ENCODE measurements at regions of chr7 and their contacts with region 1.

Region 1: DNA sequence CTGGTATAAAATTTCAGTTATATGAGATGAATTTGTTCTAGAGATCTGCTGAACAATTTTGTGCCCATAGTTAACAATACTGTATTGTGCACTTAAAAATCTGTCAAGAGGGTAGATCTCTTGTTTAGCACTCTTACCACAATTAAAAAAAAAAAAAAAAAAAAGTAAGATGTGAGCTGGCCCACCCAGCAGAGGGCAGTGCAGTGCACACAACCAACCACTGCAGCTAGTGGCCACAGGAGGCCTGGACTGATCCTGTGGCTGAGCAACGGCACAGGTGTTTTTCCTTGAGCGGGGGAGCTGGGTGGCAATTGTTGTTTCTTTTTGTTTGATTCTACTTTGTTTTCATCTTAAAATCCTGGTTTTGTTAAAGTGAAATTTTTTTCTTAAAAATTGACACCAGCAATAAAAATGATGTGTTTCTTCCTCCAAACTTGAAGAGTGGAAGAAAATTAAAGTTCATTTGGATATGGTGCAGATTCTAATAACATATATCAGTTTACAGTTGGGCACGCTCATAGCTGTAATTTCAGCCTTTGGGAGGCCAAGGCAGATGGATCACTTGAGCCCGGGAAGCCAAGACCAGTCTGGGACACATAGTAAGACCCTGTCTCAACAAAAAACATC is 171.1 kb upstream of the TBX20 start:
- DNase-seq: peak; percentile 65 to 80
- H3K4me3 ChIP-seq: no peak overlapping the region
- H3K27ac ChIP-seq: no peak overlapping the region
- H3K4me1 ChIP-seq: peaks cover 0 to 4% (median 0%) of the 10 kb centered on the region in 4 donors
- H3K27me3 ChIP-seq: peaks cover 0 to 2% (median 0%) of the 10 kb centered on the region in 3 donors
- CTCF ChIP-seq: peak in 6 of 7 experiments; percentile 21 to 79 (median 58)
- EP300 ChIP-seq: no peak
- POLR2A ChIP-seq: no peak

Region 2: DNA sequence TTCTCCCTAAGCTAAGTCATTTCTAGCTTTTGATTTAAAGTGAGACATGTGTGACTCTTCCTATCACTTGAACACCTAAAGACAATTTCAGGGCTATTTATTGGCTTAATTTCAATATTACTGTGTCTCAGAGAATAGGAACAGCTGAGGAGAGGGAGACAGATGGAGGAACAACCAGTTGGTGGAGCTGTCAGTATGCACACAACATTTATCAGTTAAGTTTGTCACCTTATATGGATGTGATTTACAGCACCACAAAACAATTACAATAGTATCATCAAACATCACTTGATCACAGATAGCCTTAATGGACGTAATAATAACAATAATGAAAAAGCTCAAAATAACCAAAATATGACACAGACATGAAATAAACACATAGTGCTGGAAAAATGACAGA is 637.4 kb before region 1 on chr7:
- intact Hi-C with region 1: no loop called
- DNase-seq: no peak
- H3K4me3 ChIP-seq: no peak overlapping the region
- H3K27ac ChIP-seq: no peak overlapping the region
- H3K4me1 ChIP-seq: no peaks in the 10 kb centered on the region
- H3K27me3 ChIP-seq: no peaks in the 10 kb centered on the region
- CTCF ChIP-seq: no peak
- EP300 ChIP-seq: no peak
- POLR2A ChIP-seq: no peak

Region 3: DNA sequence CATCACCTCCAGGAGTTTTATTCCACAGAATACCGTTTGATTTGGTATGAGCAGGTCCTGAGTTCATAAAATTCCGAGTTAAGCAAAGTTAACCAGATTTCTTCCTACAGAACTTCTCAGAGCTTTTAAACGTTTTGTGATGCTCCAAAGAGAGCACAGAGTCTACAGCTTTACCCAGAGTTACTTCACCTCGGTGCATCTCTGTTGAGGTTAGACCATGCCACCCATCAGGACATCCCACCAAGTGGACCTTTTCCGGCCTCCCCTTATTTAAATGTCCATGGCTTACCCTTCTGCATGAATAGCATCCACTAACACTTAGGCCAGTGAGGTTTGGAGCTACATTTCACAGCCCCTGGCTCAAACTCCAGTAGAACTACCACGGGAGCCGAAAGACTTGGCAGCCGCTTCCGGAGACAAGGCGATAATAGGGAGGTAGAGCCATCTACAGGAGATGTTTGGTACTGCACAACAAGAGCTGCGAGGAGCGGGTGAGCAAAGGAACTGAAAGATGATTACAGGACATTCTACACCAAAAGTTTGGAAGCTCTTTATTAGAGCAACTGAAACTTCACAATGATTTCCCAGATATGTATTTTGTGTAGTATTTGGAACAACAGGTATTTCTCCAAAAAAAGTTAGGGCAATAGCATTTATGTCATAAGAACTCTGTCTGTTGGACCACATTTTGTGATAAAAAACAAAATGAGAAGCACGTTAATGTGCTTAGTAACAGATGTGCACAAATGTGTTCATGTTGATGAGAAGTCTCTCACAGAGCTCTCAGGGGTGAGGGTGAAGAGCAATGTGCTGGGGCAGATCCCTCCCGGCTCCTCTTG is 95.2 kb after region 1 on chr7:
- intact Hi-C with region 1: loop called (anchors 10 kb)
- DNase-seq: peak; percentile 77 to 91
- H3K4me3 ChIP-seq: no peak overlapping the region
- H3K27ac ChIP-seq: no peak overlapping the region
- H3K4me1 ChIP-seq: no peaks in the 10 kb centered on the region
- H3K27me3 ChIP-seq: peaks cover 0 to 23% (median 0%) of the 10 kb centered on the region in 3 donors
- CTCF ChIP-seq: peak in 5 of 7 experiments; percentile 75 to 88 (median 79)
- EP300 ChIP-seq: no peak
- POLR2A ChIP-seq: no peak

Region 4: GRCh38 chr7:35617041-35617440 is 192.1 kb after region 1 on chr7:
- intact Hi-C with region 1: no loop called
- DNase-seq: no peak
- H3K4me3 ChIP-seq: no peak overlapping the region
- H3K27ac ChIP-seq: no peak overlapping the region
- H3K4me1 ChIP-seq: no peaks in the 10 kb centered on the region
- H3K27me3 ChIP-seq: no peaks in the 10 kb centered on the region
- CTCF ChIP-seq: no peak
- EP300 ChIP-seq: no peak
- POLR2A ChIP-seq: no peak

Measured in stomach (tissue), 19 donors.